B cell (primary cell): ENCODE measurements at regions of chr2 and their contacts with region 1.

Region 1: DNA sequence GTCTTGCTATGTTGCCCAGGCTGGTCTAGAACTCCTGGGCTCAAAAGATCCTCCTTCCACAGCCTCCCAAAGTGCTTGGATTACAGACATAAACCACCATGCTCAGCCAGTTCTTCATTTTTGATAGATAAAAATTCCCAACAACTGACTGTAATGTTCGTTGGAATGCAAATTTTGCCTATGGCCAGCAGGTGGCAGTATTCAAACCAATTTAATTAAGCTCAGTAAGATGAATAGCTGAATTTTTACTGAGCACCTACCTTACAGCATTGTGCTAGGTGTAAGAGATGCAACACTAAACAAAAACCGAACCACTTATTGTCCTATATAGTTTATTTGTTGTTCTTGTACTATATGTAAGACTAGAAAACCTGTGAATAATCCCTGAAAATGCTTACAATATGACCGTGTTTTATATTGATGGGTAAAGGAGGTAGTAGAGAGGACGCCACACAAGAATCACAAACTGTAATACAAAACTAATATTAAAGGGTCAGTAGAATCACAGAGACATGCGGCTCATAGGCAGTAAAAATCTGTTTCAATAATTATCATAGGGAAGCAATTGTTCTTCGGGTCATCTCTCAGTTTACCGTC is 8.2 kb upstream of the TMEM182 start:
- DNase-seq: peak; percentile 59
- ATAC-seq: no peak
- H3K4me3 ChIP-seq: no peak overlapping the region
- H3K4me3 Mint-ChIP-seq: no peak overlapping the region
- H3K27ac ChIP-seq: no peak overlapping the region
- H3K27ac Mint-ChIP-seq: no peak overlapping the region
- H3K4me1 ChIP-seq: peaks cover 0 to 10% of the 10 kb centered on the region in 2 donors
- H3K4me1 Mint-ChIP-seq: peaks cover 10% of the 10 kb centered on the region
- H3K27me3 ChIP-seq: no peaks in the 10 kb centered on the region
- H3K27me3 Mint-ChIP-seq: no peaks in the 10 kb centered on the region
- CTCF ChIP-seq: peak; percentile 97

Region 2: GRCh38 chr2:102103992-102104871 is 649.4 kb before region 1 on chr2:
- CTCF ChIA-PET with region 1: no interaction called
- POLR2A ChIA-PET with region 1: no interaction called
- intact Hi-C with region 1: no loop called
- DNase-seq: peak; percentile 11
- ATAC-seq: no peak
- H3K4me3 ChIP-seq: peak overlapping the region in 2 of 5 experiments; percentile 8 to 27
- H3K4me3 Mint-ChIP-seq: peak overlapping the region; percentile 64
- H3K27ac ChIP-seq: no peak overlapping the region
- H3K27ac Mint-ChIP-seq: no peak overlapping the region
- H3K4me1 ChIP-seq: peaks cover 0 to 7% of the 10 kb centered on the region in 2 donors
- H3K4me1 Mint-ChIP-seq: peaks cover 10% of the 10 kb centered on the region
- H3K27me3 ChIP-seq: peaks cover 0 to 5% (median 0%) of the 10 kb centered on the region in 4 experiments
- H3K27me3 Mint-ChIP-seq: peaks cover 45% of the 10 kb centered on the region
- CTCF ChIP-seq: no peak

Region 3: GRCh38 chr2:102736410-102737409 is 17.0 kb before region 1 on chr2:
- CTCF ChIA-PET with region 1: interaction called, 14 read pairs
- POLR2A ChIA-PET with region 1: no interaction called
- intact Hi-C with region 1: loop called (anchors 1 kb)
- DNase-seq: peak; percentile 86
- ATAC-seq: peak; percentile 96
- H3K4me3 ChIP-seq: peak overlapping the region; percentile 78 to 89 (median 85)
- H3K4me3 Mint-ChIP-seq: peak overlapping the region; percentile 97
- H3K27ac ChIP-seq: peak overlapping the region; percentile 50 to 65
- H3K27ac Mint-ChIP-seq: peak overlapping the region; percentile 92
- H3K4me1 ChIP-seq: peaks cover 25 to 26% of the 10 kb centered on the region in 2 donors
- H3K4me1 Mint-ChIP-seq: peaks cover 33% of the 10 kb centered on the region
- H3K27me3 ChIP-seq: no peaks in the 10 kb centered on the region
- H3K27me3 Mint-ChIP-seq: no peaks in the 10 kb centered on the region
- CTCF ChIP-seq: no peak